Activated T-helper 2 cell treated with anti-CD3 and anti-CD28 coated beads, Interferon-gamma antibody, Interleukin-2, Interleukin-4, amounts not matched to agents 10 μg/mL and 5 μg/mL and 100 μg/mL, durations not matched to agents 14 hours and 24 hours and 36 hours (primary cell): ENCODE measurements at regions of chr4 and their contacts with region 1.

Region 1: DNA sequence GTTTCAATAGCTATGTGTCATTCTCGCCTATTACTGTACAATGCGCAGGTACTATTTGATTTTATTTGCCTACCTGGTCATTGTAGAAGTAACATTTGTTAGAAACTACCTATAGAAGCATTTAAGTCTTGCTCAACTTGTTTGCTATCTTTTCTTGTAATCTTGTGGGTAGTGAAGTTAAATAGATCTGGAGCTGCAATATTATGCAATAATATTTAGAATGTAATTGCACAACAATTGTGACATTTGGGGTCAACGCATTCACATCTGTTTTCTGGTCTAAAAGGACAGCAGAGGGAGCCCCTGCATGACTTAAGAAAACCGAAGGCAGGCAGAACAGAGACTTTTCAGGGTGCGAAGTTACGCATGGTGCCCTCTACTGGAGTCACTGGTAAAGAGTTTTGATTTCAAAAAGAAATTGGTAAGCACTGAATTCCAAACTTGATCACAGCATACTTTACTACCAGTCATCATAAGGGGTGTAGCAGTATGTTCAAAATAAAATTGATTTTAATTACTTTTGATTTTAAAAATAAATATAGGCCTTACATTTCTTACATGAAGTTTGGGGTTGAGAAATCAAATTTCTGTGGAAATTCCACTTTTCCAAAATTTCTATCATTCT is 503.2 kb upstream of the FAM241A start:
- DNase-seq: peak; percentile 15
- H3K4me3 Mint-ChIP-seq: no peak overlapping the region
- H3K27ac Mint-ChIP-seq: no peak overlapping the region
- H3K4me1 Mint-ChIP-seq: no peaks in the 10 kb centered on the region
- H3K27me3 Mint-ChIP-seq: no peaks in the 10 kb centered on the region

Region 2: GRCh38 chr4:110631584-110632505 is 1010.2 kb before region 1 on chr4:
- intact Hi-C with region 1: loop called (anchors 5 kb)
- DNase-seq: no peak
- H3K4me3 Mint-ChIP-seq: peak overlapping the region; percentile 14
- H3K27ac Mint-ChIP-seq: peak overlapping the region; percentile 38
- H3K4me1 Mint-ChIP-seq: peaks cover 7% of the 10 kb centered on the region
- H3K27me3 Mint-ChIP-seq: peaks cover 81% of the 10 kb centered on the region

Region 3: GRCh38 chr4:111854494-111855087 is 212.5 kb after region 1 on chr4:
- intact Hi-C with region 1: loop called (anchors 5 kb)
- DNase-seq: no peak
- H3K4me3 Mint-ChIP-seq: no peak overlapping the region
- H3K27ac Mint-ChIP-seq: no peak overlapping the region
- H3K4me1 Mint-ChIP-seq: no peaks in the 10 kb centered on the region
- H3K27me3 Mint-ChIP-seq: no peaks in the 10 kb centered on the region

Region 4: GRCh38 chr4:111919666-111920065 is 277.6 kb after region 1 on chr4:
- intact Hi-C with region 1: no loop called
- DNase-seq: no peak
- H3K4me3 Mint-ChIP-seq: no peak overlapping the region
- H3K27ac Mint-ChIP-seq: no peak overlapping the region
- H3K4me1 Mint-ChIP-seq: no peaks in the 10 kb centered on the region
- H3K27me3 Mint-ChIP-seq: no peaks in the 10 kb centered on the region

Region 5: DNA sequence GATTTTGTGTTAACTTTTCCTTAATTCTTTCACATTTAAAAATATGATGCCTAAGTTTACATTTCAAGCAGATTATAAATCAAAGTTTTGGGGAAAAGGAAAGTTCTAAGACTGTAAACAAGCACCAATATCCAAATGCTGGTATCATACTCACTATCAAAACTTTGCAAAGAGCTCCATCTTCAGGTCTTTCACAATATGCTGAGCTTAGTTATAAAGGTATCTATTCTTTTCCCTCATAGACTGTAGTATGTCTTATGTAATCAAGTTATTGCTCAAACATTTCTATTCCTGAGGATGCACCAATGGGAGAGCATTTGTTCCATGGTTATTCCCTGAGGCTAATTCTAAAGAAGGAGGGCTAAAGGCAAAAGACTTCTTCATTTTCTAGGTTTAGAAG is 295.3 kb after region 1 on chr4:
- intact Hi-C with region 1: loop called (anchors 10 kb)
- DNase-seq: no peak
- H3K4me3 Mint-ChIP-seq: no peak overlapping the region
- H3K27ac Mint-ChIP-seq: no peak overlapping the region
- H3K4me1 Mint-ChIP-seq: no peaks in the 10 kb centered on the region
- H3K27me3 Mint-ChIP-seq: no peaks in the 10 kb centered on the region

Region 6: GRCh38 chr4:112031712-112032328 is 389.8 kb after region 1 on chr4:
- intact Hi-C with region 1: loop called (anchors 2 kb)
- DNase-seq: no peak
- H3K4me3 Mint-ChIP-seq: no peak overlapping the region
- H3K27ac Mint-ChIP-seq: no peak overlapping the region
- H3K4me1 Mint-ChIP-seq: no peaks in the 10 kb centered on the region
- H3K27me3 Mint-ChIP-seq: peaks cover 15% of the 10 kb centered on the region